ENCODE measurements at regions of chr19 and their contacts with region 1.

Region 1: DNA sequence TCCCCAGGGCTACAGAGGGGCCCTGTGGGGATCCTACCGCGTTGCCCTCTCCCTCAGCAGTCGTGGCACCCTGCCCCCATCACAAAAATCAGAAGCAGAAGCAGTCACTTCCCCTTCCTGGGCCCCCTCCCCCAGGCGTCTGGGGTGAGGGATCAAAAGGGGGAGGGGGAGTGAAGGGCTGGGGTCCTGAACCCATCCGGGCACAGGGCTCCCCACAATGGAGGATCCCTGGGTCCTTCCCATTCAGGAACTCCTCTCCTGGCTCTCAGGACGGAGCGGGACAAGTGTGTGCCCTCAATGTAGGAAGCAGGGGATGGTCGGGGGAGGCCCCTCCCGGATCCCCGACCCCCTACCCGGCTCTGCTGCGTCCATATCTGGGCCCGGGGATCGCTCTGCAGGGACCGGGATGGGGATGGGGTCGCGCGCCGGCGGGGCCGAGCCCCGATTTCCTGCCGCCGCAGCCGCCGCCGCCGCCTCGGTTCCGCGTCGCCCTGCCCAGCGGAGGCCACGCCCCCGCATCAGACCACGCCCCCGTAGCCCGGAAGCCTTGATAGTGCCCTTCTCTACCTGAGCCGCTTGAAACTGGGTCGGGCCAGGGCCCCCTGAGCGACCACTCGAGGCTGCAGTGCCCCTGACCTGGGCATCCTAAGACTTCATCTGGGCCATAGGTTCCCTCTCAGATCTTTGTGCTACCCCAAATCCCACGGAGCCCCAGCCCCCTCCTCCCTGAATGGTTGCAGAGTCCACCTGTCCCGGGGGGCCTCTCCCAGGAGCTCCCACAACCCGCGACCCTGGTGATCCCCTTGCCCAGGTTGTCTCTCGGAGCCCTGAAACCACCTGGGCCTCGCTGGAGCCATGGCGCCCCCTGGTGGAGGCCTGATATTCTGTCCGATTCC is at the start of gene GMIP:
- DNase-seq: peak; percentile 59
- H3K4me3 ChIP-seq: peak within 1 kb of the TSS; percentile 64 to 78 (median 66)
- H3K27ac ChIP-seq: peak within 1 kb of the TSS; percentile 24
- H3K4me1 ChIP-seq: peaks cover 3% of the 10 kb centered on the region
- H3K27me3 ChIP-seq: no peaks in the 10 kb centered on the region
- CTCF ChIP-seq: peak; percentile 63 to 90
- total RNA-seq, gene GMIP: 6.5 to 18.3 TPM

Region 2: GRCh38 chr19:19192078-19192882 is 451.1 kb before region 1 on chr19 and contains the starts of genes BORCS8 and RFXANK:
- CTCF ChIA-PET with region 1: no interaction called
- dilution Hi-C with region 1: no loop called
- in situ Hi-C with region 1: no loop called
- intact Hi-C with region 1: loop called (anchors 10 kb)
- DNase-seq: peak; percentile 98
- H3K4me3 ChIP-seq: peak within 1 kb of the TSS; percentile 80 to 94 (median 83)
- H3K27ac ChIP-seq: peak within 1 kb of the TSS; percentile 91
- H3K4me1 ChIP-seq: peaks cover 19% of the 10 kb centered on the region
- H3K27me3 ChIP-seq: no peaks in the 10 kb centered on the region
- CTCF ChIP-seq: no peak
- total RNA-seq, gene BORCS8: 13.3 to 35.1 TPM
- total RNA-seq, gene RFXANK: 66.8 to 100.0 TPM

Region 3: GRCh38 chr19:19366612-19367396 is 276.6 kb before region 1 on chr19:
- CTCF ChIA-PET with region 1: no interaction called
- dilution Hi-C with region 1: no loop called
- in situ Hi-C with region 1: no loop called
- intact Hi-C with region 1: loop called (anchors 5 kb)
- DNase-seq: peak; percentile 78
- H3K4me3 ChIP-seq: no peak overlapping the region
- H3K27ac ChIP-seq: no peak overlapping the region
- H3K4me1 ChIP-seq: peaks cover 8% of the 10 kb centered on the region
- H3K27me3 ChIP-seq: no peaks in the 10 kb centered on the region
- CTCF ChIP-seq: peak; percentile 97 to 98

Region 4: GRCh38 chr19:19531951-19532805 is 111.2 kb before region 1 on chr19:
- CTCF ChIA-PET with region 1: interaction called, 4 read pairs
- dilution Hi-C with region 1: no loop called
- in situ Hi-C with region 1: loop called (anchors 5 kb)
- intact Hi-C with region 1: loop called (anchors 1 kb)
- DNase-seq: peak; percentile 46
- H3K4me3 ChIP-seq: no peak overlapping the region
- H3K27ac ChIP-seq: no peak overlapping the region
- H3K4me1 ChIP-seq: peaks cover 3% of the 10 kb centered on the region
- H3K27me3 ChIP-seq: no peaks in the 10 kb centered on the region
- CTCF ChIP-seq: peak; percentile 82 to 97

Region 5: GRCh38 chr19:19538061-19538784 is 105.2 kb before region 1 on chr19 and contains the start of gene CILP2:
- CTCF ChIA-PET with region 1: no interaction called
- dilution Hi-C with region 1: no loop called
- in situ Hi-C with region 1: loop called (anchors 5 kb)
- intact Hi-C with region 1: no loop called
- DNase-seq: no peak
- H3K4me3 ChIP-seq: peak within 1 kb of the TSS in 1 of 3 experiments; percentile 33
- H3K27ac ChIP-seq: no peak within 1 kb of the TSS
- H3K4me1 ChIP-seq: peaks cover 7% of the 10 kb centered on the region
- H3K27me3 ChIP-seq: peaks cover 4% of the 10 kb centered on the region
- CTCF ChIP-seq: no peak
- total RNA-seq, gene CILP2: 0.67 to 1.1 TPM

Region 6: GRCh38 chr19:19554074-19555023 is 89.1 kb before region 1 on chr19:
- CTCF ChIA-PET with region 1: no interaction called
- dilution Hi-C with region 1: no loop called
- in situ Hi-C with region 1: no loop called
- intact Hi-C with region 1: loop called (anchors 5 kb)
- DNase-seq: no peak
- H3K4me3 ChIP-seq: no peak overlapping the region
- H3K27ac ChIP-seq: no peak overlapping the region
- H3K4me1 ChIP-seq: no peaks in the 10 kb centered on the region
- H3K27me3 ChIP-seq: no peaks in the 10 kb centered on the region
- CTCF ChIP-seq: peak; percentile 66 to 79

Region 7: DNA sequence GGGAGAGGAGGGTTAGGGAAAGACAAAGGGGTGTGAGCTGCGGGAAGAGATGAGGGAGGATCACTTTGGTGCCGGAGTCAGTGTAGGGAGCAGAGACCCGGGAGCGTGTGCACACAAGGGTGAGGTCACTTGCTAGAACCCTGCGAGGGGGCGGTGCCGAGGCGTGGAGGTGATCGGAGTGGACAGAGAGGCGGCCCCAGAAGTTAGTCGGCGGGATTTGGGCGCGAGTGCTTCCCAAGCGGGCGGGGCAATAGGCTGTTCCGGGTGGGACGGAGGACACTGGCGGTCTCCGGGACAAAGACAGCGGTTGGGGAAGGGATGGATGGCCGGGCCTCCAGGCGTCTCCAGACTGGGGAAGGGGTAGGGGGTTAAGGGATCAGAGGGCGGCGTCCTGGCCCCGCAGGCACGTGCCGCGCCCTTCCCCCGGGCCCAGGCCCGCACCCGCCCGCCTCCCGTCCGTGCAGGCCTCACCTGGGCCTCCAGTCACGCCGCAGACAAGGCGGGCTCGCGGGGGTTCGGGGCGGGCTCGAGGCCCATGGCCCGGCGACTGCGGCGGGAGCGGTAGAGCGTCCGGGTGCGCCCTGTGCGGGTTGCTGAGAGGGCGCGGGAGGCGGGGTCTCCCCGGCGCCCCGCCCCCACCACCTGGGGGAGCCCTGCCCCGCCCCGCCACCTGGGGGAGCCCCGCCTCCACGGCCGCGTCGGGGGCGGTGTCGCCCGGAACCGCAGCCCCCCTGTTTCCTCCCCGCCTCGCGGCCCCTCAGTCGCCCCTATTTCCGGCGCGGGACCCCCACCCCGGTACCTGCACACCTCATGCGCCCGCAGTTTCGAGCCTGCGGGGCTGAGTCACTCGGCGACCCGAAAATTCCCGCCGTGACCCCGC is 15.5 kb before region 1 on chr19 and contains the start of gene LPAR2:
- CTCF ChIA-PET with region 1: no interaction called
- dilution Hi-C with region 1: no loop called
- in situ Hi-C with region 1: no loop called
- intact Hi-C with region 1: loop called (anchors 1 kb)
- DNase-seq: peak; percentile 53
- H3K4me3 ChIP-seq: peak within 1 kb of the TSS; percentile 58 to 79 (median 68)
- H3K27ac ChIP-seq: peak within 1 kb of the TSS; percentile 20
- H3K4me1 ChIP-seq: peaks cover 14% of the 10 kb centered on the region
- H3K27me3 ChIP-seq: no peaks in the 10 kb centered on the region
- CTCF ChIP-seq: no peak
- total RNA-seq, gene LPAR2: 20.2 to 27.9 TPM